BJ (cell line): ENCODE measurements at regions of chr14 and their contacts with region 1.

Region 1: GRCh38 chr14:103104654-103105452 is 10.3 kb downstream of the EXOC3L4 start:
- DNase-seq: no peak
- H3K4me3 ChIP-seq: no peak overlapping the region
- H3K27me3 ChIP-seq: peaks cover 19% of the 10 kb centered on the region
- CTCF ChIP-seq: peak; percentile 99

Region 2: DNA sequence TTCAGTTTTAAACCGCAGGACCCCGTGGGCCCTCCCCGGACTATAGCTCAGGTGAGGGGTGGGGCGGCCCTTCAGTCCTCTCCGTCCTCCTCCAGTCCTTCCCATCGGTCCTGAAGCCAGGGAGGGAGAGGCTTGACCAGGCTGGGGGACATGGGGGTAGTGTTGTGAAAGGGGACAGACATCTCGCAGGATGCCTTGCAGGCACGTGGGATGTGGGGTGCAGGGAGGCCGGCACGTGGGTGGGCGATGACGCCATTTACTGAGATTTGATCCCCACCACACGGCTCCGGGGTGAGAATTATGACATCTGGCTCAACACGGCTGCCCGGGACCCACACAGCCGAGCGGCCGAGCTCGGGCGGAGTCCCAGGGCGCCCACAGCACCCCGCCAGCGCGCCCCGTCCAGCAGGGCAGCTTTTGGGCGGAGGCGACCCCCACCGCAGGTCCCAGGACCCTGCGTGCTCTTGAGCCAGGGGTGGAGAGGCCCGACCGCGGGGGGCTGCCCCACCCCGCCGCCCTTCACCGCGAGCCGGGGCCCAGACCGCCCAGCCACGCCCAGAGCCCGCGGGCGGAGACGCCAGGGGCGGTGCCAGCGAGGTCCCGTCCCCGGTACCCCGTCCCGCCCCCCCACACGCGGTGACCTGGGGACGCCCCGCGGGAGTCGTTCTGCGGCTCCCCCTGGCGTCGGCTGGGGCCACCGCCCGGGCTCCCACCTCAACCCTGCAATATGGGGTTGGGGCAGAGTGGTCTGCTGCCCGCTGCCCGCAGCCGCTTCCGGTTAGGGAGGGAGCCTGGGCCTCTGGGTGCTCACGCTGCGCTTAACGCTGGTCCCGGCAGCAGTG is 13.6 kb before region 1 on chr14:
- CTCF ChIA-PET with region 1: interaction called, 52 read pairs
- POLR2A ChIA-PET with region 1: no interaction called
- DNase-seq: no peak
- H3K4me3 ChIP-seq: peak overlapping the region; percentile 42
- H3K27me3 ChIP-seq: no peaks in the 10 kb centered on the region; the same call in 1 of the 2 replicates
- CTCF ChIP-seq: peak; percentile 58

Region 3: GRCh38 chr14:103141119-103141796 is 36.4 kb after region 1 on chr14:
- CTCF ChIA-PET with region 1: interaction called, 49 read pairs
- POLR2A ChIA-PET with region 1: no interaction called
- DNase-seq: no peak
- H3K4me3 ChIP-seq: no peak overlapping the region
- H3K27me3 ChIP-seq: peaks cover 2% of the 10 kb centered on the region; the same call in 1 of the 2 replicates
- CTCF ChIP-seq: peak; percentile 77

Region 4: DNA sequence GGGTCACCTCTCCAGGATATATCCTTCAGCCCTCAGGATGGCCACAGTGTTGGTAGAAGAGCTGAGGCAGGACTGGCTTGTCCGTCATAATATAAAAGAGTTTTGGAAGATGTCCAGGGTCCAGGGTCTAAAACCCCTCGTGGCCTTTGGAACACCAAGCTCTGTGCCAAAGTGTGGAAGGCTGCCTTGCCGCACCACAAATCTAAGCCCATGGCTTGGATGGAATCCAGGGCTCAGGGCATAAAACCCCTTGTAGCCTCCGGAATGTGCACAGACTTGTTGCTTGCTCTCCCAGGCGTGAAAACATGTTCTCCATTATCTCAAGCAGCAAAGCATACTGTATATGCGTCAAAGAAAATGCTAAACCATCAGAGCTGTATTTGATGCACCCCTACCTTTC is 65.1 kb after region 1 on chr14:
- CTCF ChIA-PET with region 1: interaction called, 16 read pairs
- POLR2A ChIA-PET with region 1: no interaction called
- DNase-seq: no peak
- H3K4me3 ChIP-seq: no peak overlapping the region
- H3K27me3 ChIP-seq: peaks cover 10% of the 10 kb centered on the region
- CTCF ChIP-seq: no peak

Region 5: GRCh38 chr14:103207388-103208072 is 102.7 kb after region 1 on chr14:
- CTCF ChIA-PET with region 1: interaction called, 17 read pairs
- POLR2A ChIA-PET with region 1: no interaction called
- DNase-seq: no peak
- H3K4me3 ChIP-seq: peak overlapping the region; percentile 57
- H3K27me3 ChIP-seq: no peaks in the 10 kb centered on the region
- CTCF ChIP-seq: no peak

Region 6: GRCh38 chr14:103292426-103293374 is 187.8 kb after region 1 on chr14:
- CTCF ChIA-PET with region 1: interaction called, 315 read pairs
- POLR2A ChIA-PET with region 1: interaction called, 5 read pairs
- DNase-seq: no peak
- H3K4me3 ChIP-seq: no peak overlapping the region
- H3K27me3 ChIP-seq: peaks cover 11% of the 10 kb centered on the region
- CTCF ChIP-seq: peak; percentile 96

Region 7: GRCh38 chr14:103606963-103607668 is 502.3 kb after region 1 on chr14:
- CTCF ChIA-PET with region 1: no interaction called
- POLR2A ChIA-PET with region 1: no interaction called
- DNase-seq: peak; percentile 80
- H3K4me3 ChIP-seq: no peak overlapping the region
- H3K27me3 ChIP-seq: no peaks in the 10 kb centered on the region; the same call in 1 of the 2 replicates
- CTCF ChIP-seq: peak; percentile 52